ENCODE measurements at regions of chr2 and their contacts with region 1.

Region 1: DNA sequence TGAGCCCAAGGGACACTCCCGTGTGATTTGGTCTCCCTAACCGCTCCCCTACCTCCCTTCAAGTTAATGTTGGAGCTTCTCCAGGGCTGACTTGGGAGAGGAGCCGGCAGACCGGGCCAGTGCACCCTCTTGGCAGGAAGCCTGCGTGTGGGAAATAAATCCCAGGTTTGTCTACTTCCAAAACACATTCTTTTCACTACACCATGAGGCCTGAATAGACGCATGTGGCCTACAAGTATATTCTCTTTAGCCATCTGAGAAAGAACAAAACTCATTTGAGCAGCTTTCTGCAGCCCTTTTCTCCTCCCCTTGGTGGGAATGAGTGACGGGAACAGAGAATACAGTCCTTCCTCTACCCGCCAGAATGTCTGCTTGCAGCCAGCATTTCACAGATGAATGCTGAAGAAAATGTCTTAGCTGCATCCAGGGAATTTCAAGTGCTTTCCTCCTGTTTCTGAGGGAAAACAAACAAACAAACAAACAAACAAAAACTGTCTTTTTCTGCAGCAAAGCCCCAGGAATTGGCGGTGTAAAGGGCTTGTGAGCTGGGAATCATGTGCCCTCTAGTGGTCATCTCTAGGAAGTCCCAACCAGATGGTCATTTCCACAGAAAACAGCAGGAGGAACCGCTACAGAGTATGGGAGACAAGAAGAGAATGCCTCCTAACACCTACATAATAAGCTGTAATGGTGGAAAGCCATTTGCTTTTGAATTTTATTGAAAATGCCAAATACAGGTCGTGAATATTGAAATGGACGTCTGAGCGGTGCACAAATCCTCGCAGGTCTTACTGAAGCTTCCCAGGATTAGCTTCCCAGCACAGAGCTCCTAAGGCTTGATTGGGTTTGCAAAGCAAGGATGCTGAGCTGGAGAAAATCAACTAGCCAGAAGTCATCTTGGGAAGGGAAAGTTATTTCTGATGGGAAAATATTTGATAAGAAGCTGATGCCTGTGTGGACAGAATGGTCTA is 41.2 kb upstream of the DAPL1 start:
- DNase-seq: peak; percentile 77

Region 2: DNA sequence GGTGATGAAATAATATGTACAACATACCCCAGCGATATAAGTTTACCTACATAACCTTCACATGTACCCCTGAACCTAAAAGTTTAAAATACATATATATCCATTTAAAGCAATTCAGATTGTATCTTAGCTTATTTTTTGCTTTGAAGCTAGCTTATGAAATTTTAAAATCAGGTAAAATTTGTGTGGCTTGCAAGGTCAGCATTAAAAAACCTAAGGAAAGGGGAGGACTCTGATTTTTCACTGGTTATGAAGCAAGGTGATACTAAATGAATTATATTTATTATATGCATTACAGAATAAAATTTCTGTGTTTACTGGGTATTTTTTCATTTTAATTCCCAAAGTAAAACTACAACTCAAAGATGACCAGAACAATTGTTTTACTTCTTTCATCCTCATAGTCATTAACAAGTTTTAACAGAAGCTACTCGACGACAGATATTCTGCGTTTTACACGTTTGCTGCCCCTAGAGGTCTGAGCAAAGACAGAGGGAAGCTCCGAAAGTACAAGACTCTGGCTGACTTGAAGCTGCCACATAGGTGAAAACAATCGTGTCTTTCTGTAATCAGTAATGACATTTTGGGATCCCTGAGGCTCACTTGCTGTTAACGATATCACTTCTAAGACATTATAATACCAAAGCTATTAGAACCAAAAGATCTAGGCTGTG is 280.1 kb before region 1 on chr2:
- in situ Hi-C with region 1: loop called (anchors 10 kb)
- DNase-seq: peak; percentile 40

Measured in SK-MEL-5 (cell line).